K562 (cell line): ENCODE measurements at regions of chr17 and their contacts with region 1.

Region 1: DNA sequence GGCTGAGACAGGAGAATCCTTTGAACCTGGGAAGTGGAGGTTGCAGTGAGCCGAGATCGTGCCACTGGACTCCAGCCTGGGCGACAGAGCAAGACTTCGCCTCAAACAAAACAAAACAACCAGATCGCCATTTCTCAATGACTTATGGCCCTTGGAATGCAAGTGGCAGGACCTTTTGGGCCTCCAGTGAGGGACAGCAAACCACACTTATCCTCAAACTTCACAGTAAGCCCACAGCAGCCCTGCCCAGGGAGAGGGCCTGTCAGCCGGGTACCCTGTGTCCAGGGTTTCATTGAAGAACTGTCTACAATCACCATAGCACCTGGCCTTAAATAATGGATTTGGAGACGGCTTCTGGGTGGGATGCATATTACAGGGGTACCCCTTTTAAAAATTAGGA is 11.7 kb downstream of the TRAF4 start:
- DNase-seq: no peak
- ATAC-seq: no peak; the same call in 2 of the 3 replicates
- H3K4me3 ChIP-seq: no peak overlapping the region
- H3K27ac ChIP-seq: no peak overlapping the region
- H3K4me1 ChIP-seq: peaks cover 4 to 13% of the 10 kb centered on the region in 2 experiments; a peak in 4 of 5 replicates
- H3K27me3 ChIP-seq: no peaks in the 10 kb centered on the region
- CTCF ChIP-seq: no peak
- EP300 ChIP-seq: no peak
- POLR2A ChIP-seq: peak; percentile 48; the same call in 1 of the 2 replicates
- RAD21 ChIP-seq: no peak

Region 2: GRCh38 chr17:28494445-28495188 is 260.9 kb before region 1 on chr17:
- CTCF ChIA-PET with region 1: no interaction called
- POLR2A ChIA-PET with region 1: no interaction called
- in situ Hi-C with region 1: no loop called
- intact Hi-C with region 1: no loop called
- DNase-seq: peak; percentile 81 to 89 (median 88)
- ATAC-seq: peak; percentile 94
- H3K4me3 ChIP-seq: no peak overlapping the region
- H3K27ac ChIP-seq: no peak overlapping the region
- H3K4me1 ChIP-seq: peaks cover 0 to 10% of the 10 kb centered on the region in 2 experiments; a peak in 1 of 5 replicates
- H3K27me3 ChIP-seq: peaks cover 6 to 47% of the 10 kb centered on the region in 2 experiments; a peak in 4 of 5 replicates
- CTCF ChIP-seq: peak; percentile 91 to 96 (median 91)
- EP300 ChIP-seq: no peak
- POLR2A ChIP-seq: no peak
- RAD21 ChIP-seq: peak; percentile 89 to 97

Region 3: GRCh38 chr17:28661635-28662537 is 93.6 kb before region 1 on chr17 and contains the starts of genes SDF2 and SUPT6H:
- CTCF ChIA-PET with region 1: no interaction called
- POLR2A ChIA-PET with region 1: no interaction called
- in situ Hi-C with region 1: no loop called
- intact Hi-C with region 1: no loop called
- DNase-seq: peak; percentile 92 to 97 (median 94)
- ATAC-seq: peak; percentile 89
- H3K4me3 ChIP-seq: peak within 1 kb of the TSS; percentile 61
- H3K27ac ChIP-seq: peak within 1 kb of the TSS; percentile 98
- H3K4me1 ChIP-seq: peaks cover 6 to 10% of the 10 kb centered on the region in 2 experiments; a peak in 3 of 5 replicates
- H3K27me3 ChIP-seq: no peaks in the 10 kb centered on the region
- CTCF ChIP-seq: peak; percentile 19 to 45 (median 34); a peak in 4 of 6 replicates
- EP300 ChIP-seq: no peak
- POLR2A ChIP-seq: peak; percentile 97
- RAD21 ChIP-seq: no peak
- polyA plus RNA-seq, gene SDF2: 116 to 132 TPM
- polyA plus RNA-seq, gene SUPT6H: 1.7 to 3.3 TPM

Region 4: GRCh38 chr17:28743225-28744103 is 12.0 kb before region 1 on chr17 and contains the start of gene TRAF4:
- CTCF ChIA-PET with region 1: no interaction called
- POLR2A ChIA-PET with region 1: interaction called, 21 read pairs
- in situ Hi-C with region 1: no loop called
- intact Hi-C with region 1: no loop called
- DNase-seq: peak; percentile 90 to 95 (median 93)
- ATAC-seq: peak; percentile 87
- H3K4me3 ChIP-seq: peak within 1 kb of the TSS; percentile 87
- H3K27ac ChIP-seq: peak within 1 kb of the TSS; percentile 96
- H3K4me1 ChIP-seq: peaks cover 43 to 81% of the 10 kb centered on the region in 2 experiments
- H3K27me3 ChIP-seq: no peaks in the 10 kb centered on the region
- CTCF ChIP-seq: peak in 2 of 3 experiments; percentile 41 to 63; a peak in 4 of 6 replicates
- EP300 ChIP-seq: peak; percentile 17; the same call in 1 of the 2 replicates
- POLR2A ChIP-seq: peak; percentile 50; the same call in 1 of the 2 replicates
- RAD21 ChIP-seq: peak in 1 of 2 experiments; percentile 49; a peak in 3 of 4 replicates
- polyA plus RNA-seq, gene TRAF4: 2.4 to 5.0 TPM